Mammary epithelial cell (primary cell): ENCODE measurements at regions of chr22 and their contacts with region 1.

Region 1: GRCh38 chr22:32735526-32735925 is 66.0 kb upstream of the TIMP3 start:
- DNase-seq: no peak
- H3K4me3 ChIP-seq: no peak overlapping the region
- H3K27ac ChIP-seq: no peak overlapping the region
- H3K4me1 ChIP-seq: no peaks in the 10 kb centered on the region
- H3K27me3 ChIP-seq: no peaks in the 10 kb centered on the region
- CTCF ChIP-seq: no peak

Region 2: GRCh38 chr22:32558681-32559355 is 176.7 kb before region 1 on chr22:
- CTCF ChIA-PET with region 1: no interaction called
- dilution Hi-C with region 1: no loop called
- in situ Hi-C with region 1: no loop called
- intact Hi-C with region 1: no loop called
- DNase-seq: peak; percentile 94
- H3K4me3 ChIP-seq: no peak overlapping the region
- H3K27ac ChIP-seq: no peak overlapping the region
- H3K4me1 ChIP-seq: peaks cover 23% of the 10 kb centered on the region
- H3K27me3 ChIP-seq: no peaks in the 10 kb centered on the region
- CTCF ChIP-seq: no peak

Region 3: GRCh38 chr22:32775957-32776356 is 40.4 kb after region 1 on chr22:
- CTCF ChIA-PET with region 1: interaction called, 11 read pairs
- dilution Hi-C with region 1: loop called (anchors 5 kb)
- in situ Hi-C with region 1: no loop called
- intact Hi-C with region 1: no loop called
- DNase-seq: no peak
- H3K4me3 ChIP-seq: no peak overlapping the region
- H3K27ac ChIP-seq: no peak overlapping the region
- H3K4me1 ChIP-seq: peaks cover 14% of the 10 kb centered on the region
- H3K27me3 ChIP-seq: no peaks in the 10 kb centered on the region
- CTCF ChIP-seq: peak; percentile 16 to 44